Activated T-helper 1 cell treated with anti-CD3 and anti-CD28 coated beads, Interleukin-12 subunit alpha, Interleukin-12 subunit beta, Interleukin-2, Interleukin-4 antibody, amounts not matched to agents 30 ng/mL and 10 ng/mL and 1 ng/mL, durations not matched to agents 14 hours and 24 hours and 36 hours (primary cell): ENCODE measurements at regions of chr20 and their contacts with region 1.

Region 1: DNA sequence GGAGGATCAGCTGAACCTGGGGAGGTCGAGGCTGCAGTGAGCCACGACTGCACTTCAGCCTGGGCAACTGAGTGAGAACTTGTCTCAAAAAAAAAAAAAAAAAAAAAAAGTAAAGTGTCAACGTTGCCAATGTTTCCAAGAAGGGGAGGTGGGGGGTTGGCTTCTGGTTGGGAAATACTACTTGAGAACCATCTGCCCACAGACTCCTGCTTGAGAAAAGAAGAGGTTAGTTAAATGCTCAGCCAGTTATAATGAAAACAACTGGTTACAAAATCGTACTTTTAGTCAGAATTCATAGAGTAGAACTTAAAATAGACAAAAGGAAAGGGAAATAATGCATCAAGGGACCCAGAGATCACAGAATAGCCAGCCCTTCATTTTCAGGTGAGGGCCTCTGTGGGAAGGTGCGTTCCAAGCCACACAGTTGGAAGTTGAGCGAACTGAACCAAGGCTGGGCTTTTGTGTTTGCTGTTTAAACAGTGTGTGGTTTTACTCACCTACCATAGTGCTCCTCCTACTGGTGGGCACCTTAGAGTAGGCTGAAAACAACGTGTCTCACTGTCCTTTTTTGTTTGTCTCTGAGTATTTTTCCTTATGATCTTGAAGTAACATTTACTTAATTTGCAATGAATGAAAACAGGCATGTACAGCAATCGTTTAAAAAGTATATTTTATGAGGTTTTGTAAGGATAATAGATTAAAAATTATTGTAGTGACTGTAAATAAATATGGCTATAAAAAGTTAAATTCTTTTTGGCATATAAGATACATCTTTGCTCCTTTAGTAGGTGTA is 200.7 kb downstream of the BCAS1 start:
- DNase-seq: peak; percentile 70
- H3K4me3 Mint-ChIP-seq: peak overlapping the region; percentile 62
- H3K27ac Mint-ChIP-seq: peak overlapping the region; percentile 85
- H3K4me1 Mint-ChIP-seq: peaks cover 73% of the 10 kb centered on the region
- H3K27me3 Mint-ChIP-seq: no peaks in the 10 kb centered on the region

Region 2: DNA sequence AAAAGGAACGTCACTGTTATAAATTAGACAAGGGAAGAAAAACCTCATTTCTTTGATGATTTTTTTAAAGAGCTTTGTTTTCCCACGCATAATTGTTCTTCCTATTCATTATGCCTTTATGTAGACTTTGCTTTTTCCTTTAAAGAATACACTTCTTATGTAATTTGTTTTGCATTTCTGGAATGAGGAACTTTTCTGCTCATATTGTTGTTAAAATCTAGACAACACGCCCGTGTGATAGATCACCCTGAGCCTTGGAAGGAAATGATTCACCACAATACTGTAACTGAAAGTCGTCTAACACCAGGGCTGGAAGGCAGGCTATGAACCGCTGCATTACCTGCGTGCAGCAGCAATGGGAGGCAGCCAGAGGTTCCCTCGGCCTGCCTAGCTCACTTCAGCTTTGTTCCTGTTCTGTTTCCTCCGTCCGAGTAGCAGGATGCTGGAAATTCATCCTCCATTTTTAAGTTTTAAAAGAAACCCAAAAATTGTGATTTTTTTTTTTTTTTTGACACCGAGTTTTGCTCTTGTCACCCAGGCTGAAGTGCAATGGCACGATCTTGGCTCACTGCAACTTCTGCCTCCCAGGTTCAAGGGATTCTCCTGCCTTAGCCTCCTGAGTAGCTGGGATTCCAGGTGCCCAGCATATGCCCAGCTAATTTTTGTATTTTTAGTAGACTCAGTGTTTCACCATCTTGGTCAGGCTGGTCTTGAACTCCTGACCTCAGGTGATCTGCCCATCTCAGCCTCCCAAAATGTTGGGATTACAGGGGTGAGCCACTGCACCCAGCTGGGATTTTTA is 226.4 kb before region 1 on chr20:
- intact Hi-C with region 1: loop called (anchors 1 kb)
- DNase-seq: peak; percentile 66
- H3K4me3 Mint-ChIP-seq: peak overlapping the region; percentile 76
- H3K27ac Mint-ChIP-seq: peak overlapping the region; percentile 97
- H3K4me1 Mint-ChIP-seq: peaks cover 39% of the 10 kb centered on the region
- H3K27me3 Mint-ChIP-seq: no peaks in the 10 kb centered on the region

Region 3: GRCh38 chr20:53750827-53751619 is 118.6 kb before region 1 on chr20:
- intact Hi-C with region 1: loop called (anchors 1 kb)
- DNase-seq: peak; percentile 51
- H3K4me3 Mint-ChIP-seq: peak overlapping the region; percentile 60
- H3K27ac Mint-ChIP-seq: peak overlapping the region; percentile 98
- H3K4me1 Mint-ChIP-seq: peaks cover 74% of the 10 kb centered on the region
- H3K27me3 Mint-ChIP-seq: no peaks in the 10 kb centered on the region

Region 4: DNA sequence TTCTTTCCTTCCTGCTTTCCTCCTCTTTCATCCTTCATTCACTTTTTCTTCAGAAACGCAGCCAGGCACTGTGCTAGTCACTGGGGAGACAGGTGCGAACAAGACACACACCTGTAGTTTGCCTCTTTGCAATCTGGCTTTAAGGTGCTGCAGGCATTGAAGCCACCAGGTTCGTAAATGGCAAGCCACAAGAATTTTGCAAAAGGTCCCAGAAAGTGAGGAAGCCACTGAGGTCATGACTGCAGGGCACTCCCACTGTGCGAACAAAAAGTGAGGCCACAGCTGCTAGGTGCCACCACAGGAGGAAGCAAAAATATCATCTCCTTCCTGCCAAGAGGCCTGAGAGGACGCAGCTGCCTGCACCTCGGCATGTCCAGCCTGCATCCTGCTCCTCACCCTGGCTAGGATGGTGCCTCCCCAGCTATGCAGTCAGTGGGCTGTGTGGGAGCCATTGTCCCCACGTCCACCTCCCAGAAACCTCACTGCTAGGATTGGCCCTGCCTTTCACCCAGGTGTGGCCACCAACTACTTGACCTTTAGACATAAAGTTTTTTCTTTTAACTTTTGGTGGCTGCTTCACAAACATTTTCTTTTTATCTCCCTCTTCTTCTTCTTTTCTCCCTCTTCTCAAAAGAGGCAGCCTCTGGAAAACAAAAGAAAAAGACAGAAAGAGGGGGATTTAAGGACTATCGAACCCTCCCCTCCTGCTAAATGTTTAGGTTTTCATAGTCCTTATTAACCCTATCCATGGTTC is 30.1 kb before region 1 on chr20:
- intact Hi-C with region 1: loop called (anchors 1 kb)
- DNase-seq: peak; percentile 62
- H3K4me3 Mint-ChIP-seq: peak overlapping the region; percentile 80
- H3K27ac Mint-ChIP-seq: peak overlapping the region; percentile 96
- H3K4me1 Mint-ChIP-seq: peaks cover 72% of the 10 kb centered on the region
- H3K27me3 Mint-ChIP-seq: peaks cover 2% of the 10 kb centered on the region

Region 5: DNA sequence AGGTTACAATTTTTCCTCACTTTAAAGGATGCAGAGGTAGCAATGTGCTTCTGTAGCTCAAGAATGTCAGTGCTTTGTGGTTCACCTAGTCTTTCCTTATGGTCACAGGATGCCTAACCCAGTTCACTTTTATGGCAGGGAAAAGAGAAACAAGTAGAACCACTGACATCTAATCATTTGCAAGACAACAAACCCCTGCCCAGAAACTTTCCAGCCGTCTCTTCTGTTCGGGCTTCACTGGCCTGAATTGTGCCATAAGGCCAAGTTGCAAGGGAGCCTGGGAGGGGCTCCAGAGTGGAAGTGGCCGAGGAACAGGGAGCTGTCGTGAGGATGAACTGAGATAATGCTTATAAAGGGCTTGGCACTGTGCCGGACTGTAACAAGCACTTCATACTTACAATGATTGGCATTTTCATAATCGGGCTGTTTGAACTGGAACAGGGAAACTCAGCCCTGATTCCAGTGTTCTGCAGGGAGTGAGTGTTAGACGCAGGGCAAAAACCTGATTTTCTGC is 11.9 kb before region 1 on chr20:
- intact Hi-C with region 1: no loop called
- DNase-seq: no peak
- H3K4me3 Mint-ChIP-seq: no peak overlapping the region
- H3K27ac Mint-ChIP-seq: no peak overlapping the region
- H3K4me1 Mint-ChIP-seq: peaks cover 32% of the 10 kb centered on the region
- H3K27me3 Mint-ChIP-seq: no peaks in the 10 kb centered on the region

Region 6: DNA sequence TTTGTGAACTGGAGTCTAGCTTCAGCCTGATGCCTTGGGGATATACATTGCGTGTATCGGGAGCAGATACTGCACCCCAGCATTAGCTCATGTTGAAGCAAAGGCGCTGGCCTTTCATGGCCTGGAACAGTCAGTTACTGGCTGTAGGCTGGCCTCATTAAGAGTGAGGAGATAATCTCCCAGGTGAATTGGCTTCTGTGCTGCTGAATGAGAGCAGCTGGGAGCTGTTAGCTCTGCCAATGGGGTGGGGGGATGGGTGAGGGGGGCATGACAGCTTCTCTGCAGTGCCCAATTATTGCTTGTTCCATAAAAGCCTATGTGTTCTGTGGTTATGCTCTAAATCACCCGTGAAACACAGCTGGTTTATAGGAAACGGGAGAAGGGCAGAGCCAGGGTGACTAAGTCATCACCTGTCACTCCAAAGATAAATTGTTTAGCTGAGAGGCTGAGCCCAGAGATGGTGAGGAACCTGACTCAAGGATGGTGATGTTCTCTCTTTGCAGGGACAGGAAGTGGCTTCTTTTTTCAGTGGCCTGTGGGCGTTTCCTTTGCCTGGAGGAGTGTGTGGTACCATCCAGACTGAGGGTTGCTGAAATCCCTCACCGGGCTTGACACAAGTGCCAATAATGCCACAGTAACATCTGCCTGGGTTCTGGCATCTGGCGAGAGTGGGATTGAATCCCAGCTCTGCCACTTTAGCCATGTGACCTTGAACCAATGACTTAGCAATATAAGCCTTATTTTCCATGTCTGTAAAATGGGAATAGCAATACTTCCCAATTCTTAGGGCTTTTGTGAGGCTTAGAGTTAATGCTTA is 29.9 kb after region 1 on chr20:
- intact Hi-C with region 1: loop called (anchors 1 kb)
- DNase-seq: peak; percentile 74
- H3K4me3 Mint-ChIP-seq: peak overlapping the region; percentile 69
- H3K27ac Mint-ChIP-seq: peak overlapping the region; percentile 87
- H3K4me1 Mint-ChIP-seq: peaks cover 56% of the 10 kb centered on the region
- H3K27me3 Mint-ChIP-seq: no peaks in the 10 kb centered on the region

Region 7: GRCh38 chr20:53949319-53949889 is 79.7 kb after region 1 on chr20:
- intact Hi-C with region 1: loop called (anchors 1 kb)
- DNase-seq: peak; percentile 75
- H3K4me3 Mint-ChIP-seq: peak overlapping the region; percentile 72
- H3K27ac Mint-ChIP-seq: peak overlapping the region; percentile 92
- H3K4me1 Mint-ChIP-seq: peaks cover 35% of the 10 kb centered on the region
- H3K27me3 Mint-ChIP-seq: no peaks in the 10 kb centered on the region